AG04449 (cell line): ENCODE measurements at regions of chr17 and their contacts with region 1.

Region 1: GRCh38 chr17:49556223-49556971 is 19.3 kb upstream of the NXPH3 start:
- DNase-seq: no peak
- H3K4me3 ChIP-seq: no peak overlapping the region
- CTCF ChIP-seq: peak; percentile 99

Region 2: DNA sequence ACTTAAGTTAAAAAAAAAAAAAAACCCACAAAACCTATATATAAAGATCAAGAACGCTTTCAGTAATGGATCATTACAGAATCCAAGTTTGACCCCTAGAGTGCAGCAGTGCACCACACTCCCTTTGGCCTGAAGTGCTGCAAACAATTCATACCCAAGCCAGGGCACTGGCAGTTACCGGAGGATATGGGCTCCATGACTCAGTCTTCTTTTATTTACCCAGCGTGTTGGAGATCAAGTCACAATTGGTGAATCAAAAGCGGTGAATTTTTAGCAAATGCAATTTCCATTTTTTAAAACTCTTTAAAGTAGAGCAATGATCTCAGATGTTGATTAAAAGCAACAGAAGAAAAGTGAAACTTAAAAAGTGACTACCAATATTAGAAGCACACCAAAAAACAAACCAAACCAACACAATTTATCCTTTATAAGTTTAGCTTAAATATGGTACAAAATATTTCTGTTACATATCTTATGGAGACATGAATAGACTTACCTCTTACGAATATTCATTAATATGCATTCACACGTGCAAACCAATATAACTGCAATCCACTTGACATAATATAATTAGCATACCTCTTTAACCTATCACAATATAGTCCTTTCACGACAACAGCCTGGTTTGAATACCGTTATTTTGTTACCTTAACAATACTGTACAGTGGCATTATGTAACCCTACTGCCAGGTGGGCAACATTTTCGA is 240.7 kb before region 1 on chr17:
- CTCF ChIA-PET with region 1: interaction called, 13 read pairs
- POLR2A ChIA-PET with region 1: no interaction called
- DNase-seq: peak; percentile 69
- H3K4me3 ChIP-seq: no peak overlapping the region
- CTCF ChIP-seq: peak; percentile 63

Region 3: GRCh38 chr17:49425004-49425286 is 131.5 kb before region 1 on chr17:
- CTCF ChIA-PET with region 1: interaction called, 25 read pairs
- POLR2A ChIA-PET with region 1: no interaction called
- DNase-seq: no peak
- H3K4me3 ChIP-seq: no peak overlapping the region
- CTCF ChIP-seq: no peak

Region 4: GRCh38 chr17:49465331-49465903 is 91.0 kb before region 1 on chr17:
- CTCF ChIA-PET with region 1: interaction called, 10 read pairs
- POLR2A ChIA-PET with region 1: no interaction called
- DNase-seq: no peak
- H3K4me3 ChIP-seq: no peak overlapping the region
- CTCF ChIP-seq: no peak

Region 5: DNA sequence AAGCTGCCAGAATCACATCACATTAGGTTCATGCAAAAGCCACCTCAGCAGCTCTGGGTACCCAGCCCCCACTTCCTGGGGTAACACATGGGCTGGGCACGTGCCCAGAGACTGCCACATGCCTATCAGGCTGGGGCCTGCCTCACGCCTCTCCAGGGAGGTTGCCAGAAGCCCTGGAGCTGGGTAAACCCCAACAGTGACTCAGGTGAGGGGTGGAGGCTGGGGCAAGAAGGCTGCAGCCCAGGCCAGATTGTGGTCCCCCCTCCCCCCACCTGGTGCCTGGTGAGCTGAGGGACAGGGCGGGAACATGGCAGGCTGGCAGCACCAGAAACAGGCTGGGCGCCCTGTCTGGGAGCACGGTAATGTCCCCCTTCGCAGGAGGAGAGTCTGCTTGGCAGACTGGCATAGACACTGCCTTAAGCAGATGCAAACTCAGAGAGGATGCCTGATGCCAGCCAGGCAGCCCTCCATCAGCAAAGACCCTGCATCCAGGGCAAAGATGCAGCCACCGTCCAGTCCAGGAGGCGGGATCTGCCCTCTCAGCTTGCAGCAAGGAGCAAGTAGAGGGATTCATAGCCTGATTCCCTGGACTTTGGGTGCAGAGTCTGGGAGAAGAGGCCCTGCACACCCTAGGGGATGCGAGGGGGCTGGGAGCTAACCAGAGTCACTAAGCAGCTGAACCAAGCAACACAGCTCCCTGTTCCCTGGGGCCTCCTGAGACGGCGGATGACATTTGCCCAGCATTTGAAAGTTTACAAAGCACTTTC is 32.5 kb before region 1 on chr17:
- CTCF ChIA-PET with region 1: interaction called, 39 read pairs
- POLR2A ChIA-PET with region 1: no interaction called
- DNase-seq: no peak
- H3K4me3 ChIP-seq: no peak overlapping the region
- CTCF ChIP-seq: no peak

Region 6: DNA sequence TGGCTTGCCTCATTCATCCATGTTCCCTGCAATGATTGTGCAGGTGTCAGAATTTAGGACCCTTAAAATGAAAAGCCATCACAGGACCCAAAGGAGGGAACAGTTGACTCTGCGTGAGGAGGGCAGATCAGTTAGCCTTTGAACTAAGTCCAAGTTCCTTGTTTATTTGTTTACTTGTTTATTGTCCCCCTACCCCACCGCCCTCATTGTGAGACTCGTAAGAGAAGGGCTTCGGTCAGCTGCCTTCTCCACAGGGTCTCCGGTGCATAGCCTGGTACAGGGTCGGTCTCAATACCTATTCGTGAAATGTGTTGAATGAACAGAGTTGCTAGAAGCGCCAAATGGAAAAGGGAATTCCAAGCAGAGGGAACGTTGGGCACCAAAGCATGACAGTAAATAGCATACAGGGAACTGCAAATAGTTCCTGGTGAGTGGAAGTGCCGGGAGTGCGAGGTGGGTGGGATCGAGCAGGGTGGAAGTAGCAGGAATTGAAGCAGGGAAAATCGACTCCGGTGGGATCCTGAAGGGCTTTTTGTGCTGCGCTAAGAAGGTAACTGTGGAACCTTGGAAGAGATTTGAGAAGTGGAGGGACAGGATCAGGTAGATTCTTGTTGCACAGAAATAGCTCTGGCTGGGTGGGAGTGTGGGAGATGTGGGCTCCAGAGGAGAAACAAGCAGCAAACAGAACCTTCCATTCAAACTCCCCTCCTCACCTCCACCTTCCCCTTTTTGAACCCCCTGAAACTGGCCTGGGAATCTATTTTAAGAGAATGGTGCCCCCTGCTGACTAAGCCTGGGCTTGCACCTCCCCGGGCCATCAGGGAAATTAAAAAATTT is 138.7 kb after region 1 on chr17:
- CTCF ChIA-PET with region 1: interaction called, 171 read pairs
- POLR2A ChIA-PET with region 1: interaction called, 3 read pairs
- DNase-seq: no peak
- H3K4me3 ChIP-seq: no peak overlapping the region
- CTCF ChIP-seq: peak; percentile 73